HEK293 (cell line): ENCODE measurements at regions of chr2 and their contacts with region 1.

Region 1: GRCh38 chr2:101036562-101037457 is 34.7 kb downstream of the RPL31 start:
- H3K4me3 ChIP-seq: no peak overlapping the region
- H3K27ac ChIP-seq: no peak overlapping the region
- H3K4me1 ChIP-seq: no peaks in the 10 kb centered on the region
- CTCF ChIP-seq: no peak

Region 2: GRCh38 chr2:101219246-101219645 is 182.4 kb after region 1 on chr2:
- CTCF ChIA-PET with region 1: interaction called, 11 read pairs
- POLR2A ChIA-PET with region 1: no interaction called
- H3K4me3 ChIP-seq: no peak overlapping the region
- H3K27ac ChIP-seq: no peak overlapping the region
- H3K4me1 ChIP-seq: no peaks in the 10 kb centered on the region
- CTCF ChIP-seq: no peak

Region 3: DNA sequence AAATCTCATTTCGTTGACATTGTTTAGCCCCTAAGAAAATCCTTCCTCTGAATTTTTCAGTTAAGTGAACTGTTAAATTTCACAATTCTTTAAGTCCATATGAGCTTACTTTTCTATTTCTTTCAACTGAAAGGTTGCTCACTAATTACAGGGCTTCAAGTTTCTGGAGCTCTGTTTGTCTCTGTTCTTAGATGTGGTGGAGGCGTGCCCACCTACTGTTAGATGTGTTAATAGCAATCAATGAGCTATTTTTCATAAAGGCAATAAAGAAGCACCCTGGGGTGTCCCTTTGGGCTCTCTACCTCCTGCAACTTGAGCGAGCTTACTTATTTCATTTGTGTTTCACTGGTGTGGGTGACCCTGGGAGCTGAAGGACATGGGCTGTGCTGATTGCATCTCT is 325.5 kb after region 1 on chr2:
- CTCF ChIA-PET with region 1: no interaction called
- POLR2A ChIA-PET with region 1: no interaction called
- H3K4me3 ChIP-seq: no peak overlapping the region
- H3K27ac ChIP-seq: no peak overlapping the region
- H3K4me1 ChIP-seq: no peaks in the 10 kb centered on the region
- CTCF ChIP-seq: no peak